ENCODE measurements at regions of chr4 and their contacts with region 1.

Region 1: GRCh38 chr4:40228497-40229365 is 31.9 kb downstream of the RHOH start:
- DNase-seq: peak; percentile 21
- ATAC-seq: no peak
- H3K4me3 Mint-ChIP-seq: peak overlapping the region; percentile 82
- H3K27ac Mint-ChIP-seq: peak overlapping the region; percentile 94
- H3K4me1 Mint-ChIP-seq: peaks cover 86% of the 10 kb centered on the region
- H3K27me3 Mint-ChIP-seq: no peaks in the 10 kb centered on the region

Region 2: GRCh38 chr4:40212674-40213527 is 15.8 kb before region 1 on chr4:
- POLR2A ChIA-PET with region 1: interaction called, 28 read pairs
- DNase-seq: no peak
- ATAC-seq: peak; percentile 35
- H3K4me3 Mint-ChIP-seq: peak overlapping the region; percentile 82
- H3K27ac Mint-ChIP-seq: peak overlapping the region; percentile 92
- H3K4me1 Mint-ChIP-seq: peaks cover 74% of the 10 kb centered on the region
- H3K27me3 Mint-ChIP-seq: no peaks in the 10 kb centered on the region

Region 3: DNA sequence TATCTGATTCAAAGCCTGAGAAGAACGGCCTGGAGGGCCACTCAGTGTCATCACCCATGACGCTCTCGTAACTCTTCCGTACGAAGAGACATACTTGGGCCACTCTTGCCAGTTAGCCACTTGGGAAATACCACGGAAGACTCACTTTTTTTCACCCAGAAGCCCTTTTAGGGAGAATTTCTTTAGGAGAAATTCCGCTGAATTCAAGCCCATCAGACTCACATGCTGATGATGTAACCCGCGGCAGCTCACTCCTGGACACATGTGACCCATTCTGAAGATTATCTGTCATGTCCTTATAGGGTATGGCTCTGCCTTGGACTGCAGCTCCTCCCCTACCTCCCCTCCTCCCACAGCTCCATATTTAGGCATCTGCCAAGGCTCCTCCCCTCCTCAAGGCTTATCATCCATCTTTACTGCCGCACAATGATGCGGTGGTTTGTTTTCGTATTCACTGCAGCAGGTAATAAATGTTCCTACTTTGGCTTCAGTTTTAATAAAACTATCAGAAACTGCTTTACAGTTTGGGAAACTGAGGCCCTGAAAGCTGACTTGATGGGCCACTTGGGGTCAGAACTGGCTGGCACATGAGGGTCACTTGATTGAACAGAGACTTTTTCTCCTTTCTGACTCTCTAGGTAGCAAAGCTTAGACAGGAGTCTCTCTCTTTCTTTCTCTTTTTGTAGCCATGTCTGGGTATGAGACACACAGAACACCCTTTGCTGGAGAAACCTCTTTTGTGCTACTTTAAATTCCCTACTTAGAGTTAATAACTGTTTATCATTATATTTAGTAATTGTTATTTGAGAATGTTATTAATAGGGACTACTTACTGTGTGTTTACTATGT is 10.2 kb after region 1 on chr4:
- POLR2A ChIA-PET with region 1: interaction called, 53 read pairs
- DNase-seq: peak; percentile 60
- ATAC-seq: peak; percentile 90
- H3K4me3 Mint-ChIP-seq: peak overlapping the region; percentile 81
- H3K27ac Mint-ChIP-seq: peak overlapping the region; percentile 92
- H3K4me1 Mint-ChIP-seq: peaks cover 79% of the 10 kb centered on the region
- H3K27me3 Mint-ChIP-seq: no peaks in the 10 kb centered on the region

Region 4: DNA sequence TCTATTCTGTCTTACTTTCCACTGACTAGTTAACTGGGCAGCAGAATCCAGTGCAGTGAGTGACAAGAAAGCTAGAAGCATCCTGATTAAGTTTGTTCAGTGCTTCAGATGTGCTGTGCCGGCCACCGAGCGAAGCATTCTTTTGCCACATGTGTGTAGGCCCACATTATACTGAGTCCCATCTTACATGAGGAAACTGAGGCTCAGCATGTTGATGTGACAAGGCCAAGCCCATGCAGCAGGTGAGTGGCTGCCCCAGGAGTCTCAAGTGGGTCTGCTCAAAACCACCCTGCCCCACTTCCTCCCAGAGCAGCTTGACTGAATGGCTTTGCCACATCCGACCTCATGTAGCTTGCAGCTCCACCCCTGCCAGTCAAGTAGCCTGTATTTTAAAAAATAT is 18.6 kb after region 1 on chr4:
- POLR2A ChIA-PET with region 1: interaction called, 53 read pairs
- DNase-seq: peak; percentile 71
- ATAC-seq: peak; percentile 67
- H3K4me3 Mint-ChIP-seq: peak overlapping the region; percentile 91
- H3K27ac Mint-ChIP-seq: peak overlapping the region; percentile 90
- H3K4me1 Mint-ChIP-seq: peaks cover 70% of the 10 kb centered on the region
- H3K27me3 Mint-ChIP-seq: no peaks in the 10 kb centered on the region

Measured in activated naive CD8-positive, alpha-beta T cell treated with anti-CD3 and anti-CD28 coated beads, Interleukin-2, amount 10 ng/mL, durations not matched to agents 7 days and 5 days (primary cell).